PC-3 (cell line): ENCODE measurements at regions of chr17 and their contacts with region 1.

Region 1: DNA sequence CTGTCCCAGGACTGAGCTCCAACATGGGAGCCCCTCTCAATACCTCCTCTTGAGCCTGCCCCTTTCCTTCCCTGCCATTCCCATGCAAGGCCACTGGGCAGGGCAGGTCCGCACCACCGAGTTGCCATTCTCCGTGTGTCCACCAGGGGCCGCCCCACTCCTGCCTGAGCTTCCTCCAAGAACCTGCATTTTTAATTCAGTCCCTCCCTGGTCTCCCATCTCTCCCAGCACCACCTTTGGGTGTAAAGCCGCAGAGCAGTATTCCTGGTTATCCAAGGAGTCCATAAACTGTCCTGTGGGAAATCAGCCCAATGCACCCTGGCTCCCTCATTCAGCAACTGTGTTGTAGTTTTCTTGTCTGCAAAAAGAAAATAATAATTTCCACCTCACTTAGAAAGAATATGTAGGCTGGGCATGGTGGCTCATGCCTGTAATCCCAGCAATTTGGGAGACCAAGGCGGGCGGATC is 15.9 kb upstream of the ANKRD40CL start:
- DNase-seq: peak; percentile 97
- ATAC-seq: peak; percentile 99
- H3K4me3 ChIP-seq: peak overlapping the region; percentile 27; the same call in 1 of the 2 replicates
- H3K27ac ChIP-seq: no peak overlapping the region
- H3K4me1 ChIP-seq: no peaks in the 10 kb centered on the region
- H3K27me3 ChIP-seq: no peaks in the 10 kb centered on the region
- CTCF ChIP-seq: peak; percentile 99

Region 2: DNA sequence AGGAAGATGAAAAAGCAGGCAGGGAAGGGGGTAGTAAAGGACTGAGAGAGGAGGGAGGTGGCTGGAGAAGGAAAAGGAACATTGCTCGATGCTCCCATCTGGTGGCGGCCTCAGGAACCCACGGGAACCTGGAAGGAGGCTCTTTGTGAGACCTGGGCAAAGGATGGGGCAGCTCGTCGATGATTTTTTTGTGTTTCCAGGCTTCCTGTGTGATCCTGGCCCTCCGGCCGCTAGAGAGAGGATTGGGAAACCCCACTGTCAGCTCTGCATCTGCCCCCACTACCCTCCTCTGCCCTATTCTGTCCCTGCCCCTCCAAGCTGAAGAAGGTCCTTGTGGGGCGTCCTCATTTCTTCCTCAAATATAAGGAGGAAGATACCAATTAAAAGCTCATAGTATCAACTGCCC is 58.7 kb after region 1 on chr17:
- CTCF ChIA-PET with region 1: interaction called, 23 read pairs
- POLR2A ChIA-PET with region 1: no interaction called
- intact Hi-C with region 1: loop called (anchors 1 kb)
- DNase-seq: peak; percentile 88
- ATAC-seq: peak; percentile 92
- H3K4me3 ChIP-seq: no peak overlapping the region
- H3K27ac ChIP-seq: no peak overlapping the region
- H3K4me1 ChIP-seq: peaks cover 15% of the 10 kb centered on the region; the same call in 1 of the 2 replicates
- H3K27me3 ChIP-seq: no peaks in the 10 kb centered on the region
- CTCF ChIP-seq: peak; percentile 92

Region 3: GRCh38 chr17:50893183-50893993 is 110.2 kb after region 1 on chr17:
- CTCF ChIA-PET with region 1: no interaction called
- POLR2A ChIA-PET with region 1: no interaction called
- intact Hi-C with region 1: no loop called
- DNase-seq: peak; percentile 86
- ATAC-seq: peak; percentile 44
- H3K4me3 ChIP-seq: peak overlapping the region; percentile 1; the same call in 1 of the 2 replicates
- H3K27ac ChIP-seq: peak overlapping the region; percentile 77
- H3K4me1 ChIP-seq: peaks cover 44% of the 10 kb centered on the region
- H3K27me3 ChIP-seq: no peaks in the 10 kb centered on the region
- CTCF ChIP-seq: no peak

Region 4: DNA sequence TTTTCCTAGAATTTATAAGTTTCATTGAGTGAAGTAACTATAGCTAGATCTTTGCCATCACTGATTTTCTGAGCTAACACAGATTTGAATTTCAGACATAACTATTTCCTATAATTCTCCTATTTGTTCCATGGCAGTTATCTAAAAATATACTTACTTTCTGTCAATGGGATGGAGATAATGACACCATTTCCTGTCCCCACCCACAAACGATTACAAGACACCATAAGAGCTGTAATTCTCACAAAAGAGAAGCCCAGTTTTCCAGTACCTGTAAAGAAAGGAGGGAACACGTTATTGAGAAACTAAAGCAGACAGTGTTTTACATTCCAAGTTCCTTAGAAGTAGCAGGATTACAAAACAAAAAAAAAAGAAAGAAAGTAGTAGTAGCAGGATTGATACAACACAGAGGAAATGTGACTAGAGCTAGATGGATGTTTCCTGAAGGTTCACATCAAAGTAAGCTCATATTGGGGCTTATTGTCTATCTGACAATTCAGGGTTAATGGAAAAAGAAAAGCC is 193.8 kb after region 1 on chr17:
- CTCF ChIA-PET with region 1: no interaction called
- POLR2A ChIA-PET with region 1: no interaction called
- intact Hi-C with region 1: no loop called
- DNase-seq: no peak
- ATAC-seq: no peak
- H3K4me3 ChIP-seq: no peak overlapping the region
- H3K27ac ChIP-seq: no peak overlapping the region
- H3K4me1 ChIP-seq: no peaks in the 10 kb centered on the region
- H3K27me3 ChIP-seq: no peaks in the 10 kb centered on the region
- CTCF ChIP-seq: no peak